Transverse colon (tissue), 4 donors: ENCODE measurements at regions of chr19 and their contacts with region 1.

Region 1: GRCh38 chr19:58002384-58003173 is at the start of gene ZNF606:
- DNase-seq: peak; percentile 89
- H3K4me3 ChIP-seq: peak within 1 kb of the TSS; percentile 79 to 96 (median 84)
- H3K27ac ChIP-seq: peak within 1 kb of the TSS; percentile 90 to 97 (median 92)
- H3K4me1 ChIP-seq: peaks cover 0 to 32% (median 2%) of the 10 kb centered on the region in 4 donors
- H3K27me3 ChIP-seq: no peaks in the 10 kb centered on the region
- CTCF ChIP-seq: no peak
- EP300 ChIP-seq: no peak
- POLR2A ChIP-seq: peak; percentile 72
- total RNA-seq, gene ZNF606: 13.7 to 27.7 (median 16.2) TPM

Region 2: DNA sequence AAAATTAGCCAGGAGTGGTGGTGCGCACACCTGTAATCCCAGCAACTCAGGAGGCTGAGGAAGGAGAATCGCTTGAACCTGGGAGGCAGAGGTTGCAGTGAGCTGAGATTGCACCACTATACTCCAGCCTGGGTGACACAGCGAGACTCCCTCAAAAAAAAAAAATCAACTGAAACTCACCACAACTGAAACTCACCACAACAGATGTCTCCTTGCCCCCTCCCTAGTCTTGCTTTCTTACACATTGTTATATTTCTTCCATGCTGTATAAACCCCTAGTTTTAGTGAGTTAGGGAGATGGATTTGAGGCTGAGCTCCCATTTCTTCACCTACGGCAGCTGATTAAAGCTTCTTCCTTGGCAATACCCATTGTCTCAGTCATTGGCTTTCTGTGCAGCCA is 860.9 kb before region 1 on chr19:
- in situ Hi-C with region 1: no loop called
- intact Hi-C with region 1: no loop called
- DNase-seq: no peak
- H3K4me3 ChIP-seq: no peak overlapping the region
- H3K27ac ChIP-seq: no peak overlapping the region
- H3K4me1 ChIP-seq: no peaks in the 10 kb centered on the region
- H3K27me3 ChIP-seq: no peaks in the 10 kb centered on the region
- CTCF ChIP-seq: no peak
- EP300 ChIP-seq: no peak
- POLR2A ChIP-seq: no peak

Region 3: GRCh38 chr19:57888560-57889231 is 113.9 kb before region 1 on chr19 and contains the start of gene ZNF814:
- in situ Hi-C with region 1: no loop called
- intact Hi-C with region 1: no loop called
- DNase-seq: peak; percentile 86
- H3K4me3 ChIP-seq: peak within 1 kb of the TSS; percentile 49 to 72 (median 57)
- H3K27ac ChIP-seq: peak within 1 kb of the TSS; percentile 74 to 85 (median 80)
- H3K4me1 ChIP-seq: peaks cover 0 to 21% (median 10%) of the 10 kb centered on the region in 4 donors
- H3K27me3 ChIP-seq: no peaks in the 10 kb centered on the region
- CTCF ChIP-seq: peak; percentile 32 to 66 (median 53)
- EP300 ChIP-seq: no peak
- POLR2A ChIP-seq: peak; percentile 37
- total RNA-seq, gene ZNF814: 11.5 to 25.1 (median 19.7) TPM

Region 4: DNA sequence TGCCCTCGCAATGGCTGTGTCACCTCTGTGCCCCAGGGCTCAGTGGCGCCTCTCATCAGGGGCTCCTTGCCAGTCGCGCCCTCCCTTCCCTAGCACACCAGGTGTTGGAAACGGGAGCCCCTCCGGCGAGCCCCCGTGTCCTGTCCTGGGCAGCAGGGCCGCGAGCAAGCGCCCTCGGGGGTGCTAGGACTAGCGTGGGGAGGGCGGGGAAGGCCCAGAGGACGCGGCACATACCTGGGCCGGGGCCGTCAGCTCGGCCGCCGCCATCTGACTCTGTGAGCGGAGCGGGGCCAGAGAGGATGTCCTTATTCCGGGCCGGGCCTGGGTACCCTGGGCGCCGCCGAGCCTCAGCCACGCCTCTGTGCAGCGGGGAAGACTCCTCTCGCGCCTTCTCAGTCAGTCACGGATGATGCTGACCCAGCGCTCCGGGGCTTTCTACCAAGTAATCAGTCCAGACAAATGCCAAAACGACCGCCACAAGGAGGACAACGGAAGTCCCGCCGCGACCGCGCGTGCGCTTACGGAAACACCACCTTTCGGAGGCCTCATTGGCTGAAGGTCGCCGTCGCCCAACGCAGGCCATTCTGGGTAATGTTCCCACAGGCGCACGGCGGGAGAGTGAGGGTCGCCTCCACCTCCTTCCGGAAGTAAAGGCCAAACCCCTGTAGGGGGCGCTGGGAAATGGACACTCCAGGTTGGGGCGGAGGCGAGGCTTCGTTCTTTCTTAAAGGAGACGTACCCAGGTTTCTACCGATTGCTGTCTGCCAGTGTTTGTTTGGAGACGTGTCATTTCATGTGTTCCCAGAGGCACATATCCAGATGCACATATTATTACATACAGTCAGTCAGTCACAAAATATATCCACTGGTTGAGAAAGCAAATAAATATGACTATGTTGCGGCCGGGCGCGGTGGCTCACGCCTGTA is 55.1 kb before region 1 on chr19 and contains the start of gene ZNF256:
- in situ Hi-C with region 1: no loop called
- intact Hi-C with region 1: loop called (anchors 10 kb)
- DNase-seq: peak; percentile 94
- H3K4me3 ChIP-seq: peak within 1 kb of the TSS; percentile 64 to 82 (median 73)
- H3K27ac ChIP-seq: peak within 1 kb of the TSS; percentile 64 to 82 (median 75)
- H3K4me1 ChIP-seq: peaks cover 0 to 10% (median 9%) of the 10 kb centered on the region in 4 donors
- H3K27me3 ChIP-seq: no peaks in the 10 kb centered on the region
- CTCF ChIP-seq: peak; percentile 39 to 76 (median 61)
- EP300 ChIP-seq: no peak
- POLR2A ChIP-seq: peak; percentile 36
- total RNA-seq, gene ZNF256: 3.8 to 13.5 (median 4.2) TPM

Region 5: GRCh38 chr19:58083021-58083420 is 80.4 kb after region 1 on chr19:
- in situ Hi-C with region 1: no loop called
- intact Hi-C with region 1: no loop called
- DNase-seq: no peak
- H3K4me3 ChIP-seq: no peak overlapping the region
- H3K27ac ChIP-seq: no peak overlapping the region
- H3K4me1 ChIP-seq: no peaks in the 10 kb centered on the region
- H3K27me3 ChIP-seq: no peaks in the 10 kb centered on the region
- CTCF ChIP-seq: no peak
- EP300 ChIP-seq: no peak
- POLR2A ChIP-seq: no peak